Upper lobe of right lung (tissue), 1 donor: ENCODE measurements at regions of chr2 and their contacts with region 1.

Region 1: DNA sequence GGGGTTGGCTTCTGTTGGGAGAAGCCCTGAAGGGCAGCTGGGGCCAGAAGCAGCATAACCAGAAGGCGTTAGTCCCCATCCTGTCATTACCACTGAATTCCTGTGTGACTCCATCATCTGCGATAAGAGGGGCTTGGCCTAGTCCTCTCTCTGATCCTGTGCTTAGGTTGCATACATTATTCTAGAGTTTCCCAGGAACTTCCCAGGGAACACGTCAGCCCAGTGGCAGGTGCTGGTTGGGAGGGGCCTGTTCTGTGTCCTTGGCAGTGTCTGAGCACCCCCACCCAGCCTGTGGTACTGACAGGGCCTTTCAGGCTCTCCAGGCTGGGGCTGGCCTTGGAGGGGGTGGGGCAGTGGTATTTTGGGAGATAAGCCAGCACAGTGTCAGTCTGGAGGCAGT is 4.5 kb upstream of the TOGARAM2 start:
- DNase-seq: no peak
- ATAC-seq: peak; percentile 81
- H3K4me3 ChIP-seq: no peak overlapping the region
- H3K27ac ChIP-seq: no peak overlapping the region
- H3K4me1 ChIP-seq: peaks cover 5% of the 10 kb centered on the region
- H3K27me3 ChIP-seq: no peaks in the 10 kb centered on the region
- CTCF ChIP-seq: no peak

Region 2: DNA sequence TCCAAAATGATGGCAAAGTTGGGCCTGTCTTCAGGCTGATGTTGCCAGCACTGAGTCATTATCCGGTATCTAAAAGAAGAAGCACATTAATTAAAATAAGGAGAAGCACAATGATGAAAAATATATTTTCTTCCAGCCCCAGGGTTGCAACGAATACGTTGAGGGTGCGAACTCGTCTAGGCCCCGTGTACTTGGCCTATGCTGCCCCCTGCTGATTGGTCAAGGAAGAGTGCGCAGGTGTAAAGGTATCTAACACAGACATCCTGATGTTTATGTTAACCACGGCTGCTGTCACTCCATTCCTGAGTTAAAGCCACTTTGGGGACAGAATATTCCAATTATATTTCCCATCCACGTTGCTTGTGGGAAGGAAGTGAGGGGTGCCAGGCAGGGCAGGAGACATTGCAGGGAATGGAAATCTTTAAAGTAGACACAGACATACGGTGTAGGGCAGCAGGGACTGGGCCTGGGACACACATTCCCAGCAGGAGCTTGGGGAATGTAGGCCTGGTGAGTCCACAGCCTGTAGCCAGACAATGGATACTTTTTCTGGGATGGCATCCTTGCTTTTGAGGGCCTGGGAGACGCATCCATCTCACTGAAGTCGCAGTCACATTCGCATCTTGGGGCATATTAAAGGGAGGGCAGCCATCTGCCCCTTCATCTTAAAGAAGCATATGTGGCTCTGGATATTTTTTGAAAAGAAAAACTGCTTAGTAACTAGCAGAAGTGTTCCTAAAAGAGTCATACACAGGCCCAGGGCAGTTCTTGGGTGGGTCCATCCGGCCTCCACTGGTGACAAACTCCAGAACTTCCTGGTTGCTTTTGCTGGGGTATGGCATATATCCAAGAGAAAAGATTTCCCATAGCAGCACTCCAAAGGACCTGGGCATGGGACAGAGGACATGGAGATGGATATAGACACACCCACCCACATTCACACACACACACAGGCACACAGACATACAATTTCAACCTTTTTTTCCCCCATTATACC is 220.5 kb after region 1 on chr2:
- intact Hi-C with region 1: loop called (anchors 10 kb)
- DNase-seq: peak; percentile 73
- ATAC-seq: peak; percentile 95
- H3K4me3 ChIP-seq: no peak overlapping the region
- H3K27ac ChIP-seq: no peak overlapping the region
- H3K4me1 ChIP-seq: no peaks in the 10 kb centered on the region
- H3K27me3 ChIP-seq: no peaks in the 10 kb centered on the region
- CTCF ChIP-seq: peak; percentile 78